ENCODE measurements at regions of chr2 and their contacts with region 1.

Region 1: GRCh38 chr2:37877457-37878315 is 47.4 kb upstream of the RMDN2 start:
- DNase-seq: peak; percentile 62
- ATAC-seq: peak; percentile 68
- H3K4me3 ChIP-seq: no peak overlapping the region
- H3K27ac ChIP-seq: no peak overlapping the region
- H3K4me1 ChIP-seq: no peaks in the 10 kb centered on the region
- H3K27me3 ChIP-seq: peaks cover 9 to 59% of the 10 kb centered on the region in 2 experiments; a peak in 4 of 5 replicates
- CTCF ChIP-seq: peak; percentile 80
- EP300 ChIP-seq: no peak
- POLR2A ChIP-seq: no peak
- RAD21 ChIP-seq: peak; percentile 42; the same call in 1 of the 2 replicates

Region 2: GRCh38 chr2:37414470-37414949 is 463.2 kb before region 1 on chr2:
- CTCF ChIA-PET with region 1: interaction called, 7 read pairs
- POLR2A ChIA-PET with region 1: no interaction called
- in situ Hi-C with region 1: no loop called
- intact Hi-C with region 1: loop called (anchors 1 kb)
- DNase-seq: peak; percentile 39
- ATAC-seq: peak; percentile 87
- H3K4me3 ChIP-seq: no peak overlapping the region
- H3K27ac ChIP-seq: no peak overlapping the region
- H3K4me1 ChIP-seq: no peaks in the 10 kb centered on the region
- H3K27me3 ChIP-seq: peaks cover 0 to 10% of the 10 kb centered on the region in 2 experiments; a peak in 3 of 5 replicates
- CTCF ChIP-seq: peak; percentile 72
- EP300 ChIP-seq: no peak
- POLR2A ChIP-seq: no peak
- RAD21 ChIP-seq: peak; percentile 72

Region 3: GRCh38 chr2:37809525-37809924 is 68.2 kb before region 1 on chr2:
- CTCF ChIA-PET with region 1: no interaction called
- POLR2A ChIA-PET with region 1: no interaction called
- in situ Hi-C with region 1: no loop called
- intact Hi-C with region 1: loop called (anchors 1 kb)
- DNase-seq: no peak
- ATAC-seq: no peak
- H3K4me3 ChIP-seq: no peak overlapping the region
- H3K27ac ChIP-seq: no peak overlapping the region
- H3K4me1 ChIP-seq: no peaks in the 10 kb centered on the region
- H3K27me3 ChIP-seq: peaks cover 0 to 9% of the 10 kb centered on the region in 2 experiments; a peak in 1 of 5 replicates
- CTCF ChIP-seq: no peak
- EP300 ChIP-seq: no peak
- POLR2A ChIP-seq: no peak
- RAD21 ChIP-seq: no peak

Region 4: GRCh38 chr2:37865640-37866039 is 12.0 kb before region 1 on chr2:
- CTCF ChIA-PET with region 1: no interaction called
- POLR2A ChIA-PET with region 1: no interaction called
- in situ Hi-C with region 1: no loop called
- intact Hi-C with region 1: no loop called
- DNase-seq: no peak
- ATAC-seq: no peak
- H3K4me3 ChIP-seq: no peak overlapping the region
- H3K27ac ChIP-seq: no peak overlapping the region
- H3K4me1 ChIP-seq: no peaks in the 10 kb centered on the region
- H3K27me3 ChIP-seq: peaks cover 0 to 23% of the 10 kb centered on the region in 2 experiments; a peak in 2 of 5 replicates
- CTCF ChIP-seq: no peak
- EP300 ChIP-seq: no peak
- POLR2A ChIP-seq: no peak
- RAD21 ChIP-seq: no peak

Region 5: GRCh38 chr2:37925063-37925897 is 47.6 kb after region 1 on chr2 and contains the start of gene RMDN2:
- CTCF ChIA-PET with region 1: no interaction called
- POLR2A ChIA-PET with region 1: interaction called, 3 read pairs
- in situ Hi-C with region 1: no loop called
- intact Hi-C with region 1: loop called (anchors 5 kb)
- DNase-seq: peak; percentile 97
- ATAC-seq: peak; percentile 97
- H3K4me3 ChIP-seq: peak within 1 kb of the TSS; percentile 78 to 97 (median 90)
- H3K27ac ChIP-seq: peak within 1 kb of the TSS; percentile 98
- H3K4me1 ChIP-seq: peaks cover 75% of the 10 kb centered on the region
- H3K27me3 ChIP-seq: no peaks in the 10 kb centered on the region
- CTCF ChIP-seq: peak; percentile 63
- EP300 ChIP-seq: peak in 1 of 2 experiments; percentile 75; a peak in 2 of 4 replicates
- POLR2A ChIP-seq: peak; percentile 97 to 98
- RAD21 ChIP-seq: peak; percentile 84; the same call in 1 of the 2 replicates
- total RNA-seq, gene RMDN2: 4.7 and 8.9 TPM in 2 replicates